ENCODE measurements at regions of chr9 and their contacts with region 1.

Region 1: GRCh38 chr9:131733541-131734061 is 6.3 kb downstream of the RAPGEF1 start:
- DNase-seq: peak; percentile 80
- H3K4me3 Mint-ChIP-seq: peak overlapping the region; percentile 79
- H3K27ac Mint-ChIP-seq: peak overlapping the region; percentile 93
- H3K4me1 Mint-ChIP-seq: peaks cover 78% of the 10 kb centered on the region
- H3K27me3 Mint-ChIP-seq: no peaks in the 10 kb centered on the region

Region 2: GRCh38 chr9:131393622-131394463 is 339.8 kb before region 1 on chr9 and contains the start of gene PRRC2B:
- intact Hi-C with region 1: loop called (anchors 5 kb)
- DNase-seq: peak; percentile 95
- H3K4me3 Mint-ChIP-seq: peak within 1 kb of the TSS; percentile 91
- H3K27ac Mint-ChIP-seq: peak within 1 kb of the TSS; percentile 94
- H3K4me1 Mint-ChIP-seq: peaks cover 39% of the 10 kb centered on the region
- H3K27me3 Mint-ChIP-seq: peaks cover 5% of the 10 kb centered on the region
- total RNA-seq, gene PRRC2B: 114 and 128 TPM in 2 replicates

Region 3: DNA sequence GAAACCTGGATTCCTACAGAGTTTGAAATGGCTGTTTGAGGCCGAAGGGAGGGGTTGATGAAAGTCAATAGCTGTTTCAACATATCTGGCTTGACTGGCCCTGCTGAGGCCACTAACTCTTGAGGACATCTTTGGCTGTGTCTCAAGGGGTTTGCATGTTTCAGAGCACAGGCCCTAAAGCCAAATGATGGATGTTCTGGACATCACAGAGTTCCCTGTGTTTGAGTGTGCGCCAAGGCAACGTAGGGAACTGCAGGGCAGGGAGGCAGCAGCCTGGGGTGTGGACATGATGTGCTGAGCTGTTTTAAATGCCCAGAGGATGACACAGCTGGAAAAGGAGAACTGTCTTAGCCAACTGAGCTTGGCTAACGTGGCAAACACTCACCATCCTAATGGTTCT is 83.3 kb before region 1 on chr9:
- intact Hi-C with region 1: loop called (anchors 1 kb)
- DNase-seq: no peak
- H3K4me3 Mint-ChIP-seq: no peak overlapping the region
- H3K27ac Mint-ChIP-seq: no peak overlapping the region
- H3K4me1 Mint-ChIP-seq: peaks cover 50% of the 10 kb centered on the region
- H3K27me3 Mint-ChIP-seq: no peaks in the 10 kb centered on the region

Region 4: GRCh38 chr9:131678499-131679111 is 55.0 kb before region 1 on chr9:
- intact Hi-C with region 1: loop called (anchors 1 kb)
- DNase-seq: peak; percentile 92
- H3K4me3 Mint-ChIP-seq: peak overlapping the region; percentile 75
- H3K27ac Mint-ChIP-seq: peak overlapping the region; percentile 95
- H3K4me1 Mint-ChIP-seq: peaks cover 72% of the 10 kb centered on the region
- H3K27me3 Mint-ChIP-seq: no peaks in the 10 kb centered on the region

Region 5: DNA sequence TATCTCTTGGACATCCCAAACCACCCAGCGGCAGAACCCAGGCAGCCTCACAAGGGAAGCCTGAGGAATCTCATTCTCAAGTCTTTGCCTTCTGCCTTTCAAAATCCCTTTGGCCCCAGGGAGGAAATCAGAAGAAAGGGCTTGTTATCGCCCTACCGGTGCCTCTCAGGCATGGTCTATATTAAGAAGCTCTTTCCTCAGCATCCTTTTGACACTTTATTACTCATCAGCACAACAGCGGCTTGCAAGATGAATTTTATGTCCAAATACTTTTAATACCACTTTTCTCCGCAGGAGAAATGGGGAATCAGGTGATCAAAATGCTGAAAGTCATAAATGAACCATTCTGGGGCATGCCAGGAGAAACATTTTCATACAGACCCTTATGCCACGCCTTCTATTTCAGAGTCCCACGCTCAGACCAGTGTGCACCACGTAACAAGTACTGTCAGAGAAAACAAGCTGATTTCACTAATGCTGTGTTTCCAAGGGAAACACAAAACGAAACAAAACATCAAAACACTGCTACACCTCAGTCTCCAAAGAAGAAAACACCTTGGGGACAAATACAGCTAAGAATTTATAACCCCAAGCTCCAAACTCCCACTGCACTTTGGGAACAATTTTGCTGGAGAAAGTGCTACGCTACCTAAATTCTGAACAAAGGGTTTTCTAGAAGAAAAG is 23.7 kb before region 1 on chr9:
- intact Hi-C with region 1: loop called (anchors 1 kb)
- DNase-seq: peak; percentile 85
- H3K4me3 Mint-ChIP-seq: peak overlapping the region; percentile 72
- H3K27ac Mint-ChIP-seq: peak overlapping the region; percentile 98
- H3K4me1 Mint-ChIP-seq: peaks cover 68% of the 10 kb centered on the region
- H3K27me3 Mint-ChIP-seq: no peaks in the 10 kb centered on the region

Measured in activated CD4-positive, alpha-beta T cell treated with anti-CD3 and anti-CD28 coated beads, Interleukin-2, amount 10 ng/mL, durations not matched to agents 24 days and 14 days (primary cell).